ENCODE measurements at regions of chr11 and their contacts with region 1.

Region 1: GRCh38 chr11:4072668-4073285 is 21.8 kb upstream of the RRM1 start:
- DNase-seq: peak; percentile 73
- ATAC-seq: peak; percentile 95
- H3K4me3 ChIP-seq: no peak overlapping the region
- H3K27ac ChIP-seq: no peak overlapping the region
- H3K4me1 ChIP-seq: no peaks in the 10 kb centered on the region
- H3K27me3 ChIP-seq: no peaks in the 10 kb centered on the region
- CTCF ChIP-seq: peak; percentile 90

Region 2: DNA sequence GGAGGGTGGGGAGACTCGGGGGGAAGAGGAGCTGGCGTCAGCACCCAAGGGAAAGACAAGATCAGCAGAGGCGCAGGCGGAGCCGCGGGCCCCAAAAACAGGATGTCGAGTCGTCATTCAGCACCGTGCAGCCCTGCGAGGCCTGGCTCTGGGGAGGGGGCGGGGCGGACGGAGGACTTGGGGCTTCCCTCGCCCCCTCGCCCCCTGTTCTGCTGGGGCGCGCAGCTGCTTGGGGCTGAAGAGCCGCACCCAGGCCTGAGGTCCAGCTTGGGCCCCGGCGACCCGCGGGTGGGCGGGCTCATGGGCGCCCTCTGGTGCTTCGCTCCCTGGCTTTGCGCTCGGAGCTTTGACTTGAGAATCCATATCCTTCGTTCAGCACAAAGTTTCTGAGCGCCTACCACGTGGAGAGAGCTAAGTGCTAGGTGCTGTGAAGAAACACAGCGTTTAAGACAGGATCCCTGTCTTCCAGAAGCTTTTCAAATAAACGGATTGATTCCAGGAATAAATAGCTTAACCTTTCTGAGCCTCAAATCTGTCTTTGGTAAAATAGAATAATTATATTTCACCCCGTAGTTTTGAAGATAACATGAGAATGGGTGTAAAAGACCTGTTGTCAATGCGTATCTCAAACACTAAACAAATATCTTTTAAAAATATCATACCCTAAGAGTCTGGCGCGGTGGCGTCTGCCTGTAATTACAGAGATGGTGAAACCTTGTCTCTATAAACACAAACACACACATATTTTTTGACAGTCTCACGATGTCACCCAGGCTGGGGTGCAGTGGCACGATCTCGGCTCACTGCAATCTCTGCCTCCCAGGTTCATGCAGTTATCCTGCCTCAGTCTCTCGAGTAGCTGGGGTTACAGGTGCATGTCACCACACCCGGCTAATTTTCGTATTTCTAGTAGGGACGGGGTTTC is 231.1 kb before region 1 on chr11:
- CTCF ChIA-PET with region 1: interaction called, 139 read pairs
- POLR2A ChIA-PET with region 1: no interaction called
- in situ Hi-C with region 1: no loop called
- intact Hi-C with region 1: no loop called
- DNase-seq: peak; percentile 82
- ATAC-seq: peak; percentile 84
- H3K4me3 ChIP-seq: peak overlapping the region; percentile 62 to 63
- H3K27ac ChIP-seq: peak overlapping the region; percentile 84
- H3K4me1 ChIP-seq: peaks cover 36% of the 10 kb centered on the region
- H3K27me3 ChIP-seq: no peaks in the 10 kb centered on the region
- CTCF ChIP-seq: peak; percentile 100

Region 3: GRCh38 chr11:3849297-3849874 is 223.4 kb before region 1 on chr11:
- CTCF ChIA-PET with region 1: interaction called, 139 read pairs
- POLR2A ChIA-PET with region 1: interaction called, 11 read pairs
- in situ Hi-C with region 1: no loop called
- intact Hi-C with region 1: loop called (anchors 1 kb)
- DNase-seq: no peak
- ATAC-seq: peak; percentile 84
- H3K4me3 ChIP-seq: no peak overlapping the region
- H3K27ac ChIP-seq: no peak overlapping the region
- H3K4me1 ChIP-seq: peaks cover 3% of the 10 kb centered on the region
- H3K27me3 ChIP-seq: no peaks in the 10 kb centered on the region; the same call in 1 of the 2 replicates
- CTCF ChIP-seq: peak; percentile 92

Region 4: GRCh38 chr11:3894128-3894731 is 178.5 kb before region 1 on chr11:
- CTCF ChIA-PET with region 1: no interaction called
- POLR2A ChIA-PET with region 1: no interaction called
- in situ Hi-C with region 1: no loop called
- intact Hi-C with region 1: no loop called
- DNase-seq: no peak
- ATAC-seq: peak; percentile 32; the same call in 1 of the 2 replicates
- H3K4me3 ChIP-seq: no peak overlapping the region
- H3K27ac ChIP-seq: no peak overlapping the region; the same call in 1 of the 2 replicates
- H3K4me1 ChIP-seq: peaks cover 16% of the 10 kb centered on the region; the same call in 1 of the 2 replicates
- H3K27me3 ChIP-seq: no peaks in the 10 kb centered on the region
- CTCF ChIP-seq: no peak

Region 5: DNA sequence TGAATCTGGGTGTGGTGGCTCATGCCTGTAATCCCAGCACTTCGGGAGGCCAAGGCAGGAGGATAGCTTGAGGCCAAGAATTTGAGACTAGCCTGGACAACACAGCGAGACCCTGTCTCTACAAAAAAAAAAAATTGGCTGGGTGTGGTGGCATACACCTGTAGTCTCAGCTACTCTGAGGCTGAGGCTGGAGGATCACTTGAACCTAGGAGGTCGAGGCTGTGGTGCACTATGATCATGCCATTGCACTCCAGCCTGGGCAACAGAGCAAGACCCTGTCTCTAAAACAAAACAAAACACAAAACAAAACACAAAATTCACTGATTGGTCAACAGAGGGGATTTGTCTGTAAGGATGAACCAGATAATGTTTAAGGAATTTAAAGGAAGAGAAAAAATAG is 103.6 kb before region 1 on chr11:
- CTCF ChIA-PET with region 1: no interaction called
- POLR2A ChIA-PET with region 1: no interaction called
- in situ Hi-C with region 1: no loop called
- intact Hi-C with region 1: no loop called
- DNase-seq: no peak
- ATAC-seq: no peak
- H3K4me3 ChIP-seq: no peak overlapping the region
- H3K27ac ChIP-seq: no peak overlapping the region
- H3K4me1 ChIP-seq: no peaks in the 10 kb centered on the region
- H3K27me3 ChIP-seq: no peaks in the 10 kb centered on the region
- CTCF ChIP-seq: no peak

Region 6: GRCh38 chr11:3984896-3985295 is 87.9 kb before region 1 on chr11:
- CTCF ChIA-PET with region 1: no interaction called
- POLR2A ChIA-PET with region 1: no interaction called
- in situ Hi-C with region 1: no loop called
- intact Hi-C with region 1: no loop called
- DNase-seq: no peak
- ATAC-seq: no peak
- H3K4me3 ChIP-seq: no peak overlapping the region
- H3K27ac ChIP-seq: no peak overlapping the region
- H3K4me1 ChIP-seq: no peaks in the 10 kb centered on the region
- H3K27me3 ChIP-seq: no peaks in the 10 kb centered on the region
- CTCF ChIP-seq: peak; percentile 15; the same call in 1 of the 2 replicates

Region 7: GRCh38 chr11:4025248-4025966 is 47.4 kb before region 1 on chr11:
- CTCF ChIA-PET with region 1: no interaction called
- POLR2A ChIA-PET with region 1: no interaction called
- in situ Hi-C with region 1: no loop called
- intact Hi-C with region 1: no loop called
- DNase-seq: no peak
- ATAC-seq: no peak
- H3K4me3 ChIP-seq: no peak overlapping the region
- H3K27ac ChIP-seq: no peak overlapping the region
- H3K4me1 ChIP-seq: no peaks in the 10 kb centered on the region
- H3K27me3 ChIP-seq: no peaks in the 10 kb centered on the region
- CTCF ChIP-seq: no peak

Region 8: GRCh38 chr11:4094348-4095291 is 21.8 kb after region 1 on chr11 and contains the start of gene RRM1:
- CTCF ChIA-PET with region 1: no interaction called
- POLR2A ChIA-PET with region 1: interaction called, 11 read pairs
- in situ Hi-C with region 1: no loop called
- intact Hi-C with region 1: no loop called
- DNase-seq: peak; percentile 89
- ATAC-seq: peak; percentile 99
- H3K4me3 ChIP-seq: peak within 1 kb of the TSS; percentile 64 to 88
- H3K27ac ChIP-seq: peak within 1 kb of the TSS; percentile 96
- H3K4me1 ChIP-seq: peaks cover 3% of the 10 kb centered on the region; the same call in 1 of the 2 replicates
- H3K27me3 ChIP-seq: no peaks in the 10 kb centered on the region
- CTCF ChIP-seq: no peak
- total RNA-seq, gene RRM1: 143 TPM